SK-N-SH (cell line): ENCODE measurements at regions of chr5 and their contacts with region 1.

Region 1: DNA sequence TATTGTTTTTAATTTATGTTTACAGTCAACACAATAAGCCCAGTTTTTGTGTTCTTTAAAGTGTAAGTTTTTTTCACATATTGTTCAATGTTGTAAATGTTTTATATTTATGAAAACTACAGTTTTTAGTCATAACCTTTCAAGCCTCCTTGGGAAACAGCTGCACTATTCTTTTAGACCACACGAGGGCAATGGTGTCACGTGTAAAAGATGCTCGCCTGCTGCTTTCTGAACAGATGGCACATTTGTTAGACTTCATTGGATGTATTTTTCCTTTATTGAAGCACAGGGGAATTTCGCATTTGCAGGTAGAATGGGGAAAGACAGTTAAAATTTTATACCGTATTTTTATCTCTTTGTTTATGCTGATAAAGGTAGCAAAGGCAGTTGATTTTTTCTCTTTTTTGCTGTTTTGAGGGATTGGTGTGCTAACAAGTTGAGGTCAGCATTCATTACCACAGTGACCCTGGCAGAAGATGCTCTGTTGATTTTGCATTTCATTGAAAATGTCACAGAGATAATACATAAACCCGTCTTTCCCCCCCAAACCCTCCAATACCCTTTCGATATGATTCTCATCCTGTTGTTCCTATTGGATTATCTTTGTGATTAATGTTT is 59.0 kb downstream of the MAT2B start:
- DNase-seq: peak; percentile 58
- H3K4me3 ChIP-seq: no peak overlapping the region; a peak in 1 of 4 replicates
- H3K27ac ChIP-seq: peak overlapping the region in 1 of 2 experiments; percentile 64; a peak in 1 of 4 replicates
- H3K4me1 ChIP-seq: peaks cover 0 to 16% of the 10 kb centered on the region in 2 experiments; a peak in 3 of 4 replicates
- H3K27me3 ChIP-seq: no peaks in the 10 kb centered on the region
- CTCF ChIP-seq: peak; percentile 95
- EP300 ChIP-seq: peak in 1 of 2 experiments; percentile 9; a peak in 1 of 4 replicates
- RAD21 ChIP-seq: peak; percentile 98

Region 2: DNA sequence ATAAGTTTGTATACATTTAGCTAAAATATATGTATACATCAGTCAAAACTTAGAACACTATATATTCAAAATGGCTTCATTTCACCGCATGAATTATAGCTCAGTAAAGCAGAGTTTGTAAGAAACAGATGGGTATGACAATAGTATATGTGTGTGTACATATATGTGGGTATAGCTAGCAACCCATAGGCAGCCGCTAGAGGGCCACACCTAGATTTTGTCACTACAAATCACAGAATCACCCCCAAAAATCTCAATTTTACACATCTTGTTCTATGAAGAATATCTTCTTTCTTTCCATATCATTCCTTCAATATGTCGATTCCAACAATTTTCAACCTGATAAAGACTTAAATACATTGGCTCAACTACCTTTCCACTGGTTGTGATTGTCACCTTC is 484.8 kb before region 1 on chr5:
- CTCF ChIA-PET with region 1: no interaction called
- POLR2A ChIA-PET with region 1: no interaction called
- DNase-seq: peak; percentile 1
- H3K4me3 ChIP-seq: no peak overlapping the region
- H3K27ac ChIP-seq: no peak overlapping the region
- H3K4me1 ChIP-seq: no peaks in the 10 kb centered on the region
- H3K27me3 ChIP-seq: no peaks in the 10 kb centered on the region
- CTCF ChIP-seq: peak; percentile 57
- EP300 ChIP-seq: no peak
- RAD21 ChIP-seq: peak; percentile 19; the same call in 1 of the 2 replicates

Region 3: GRCh38 chr5:163552536-163552935 is 11.9 kb before region 1 on chr5:
- CTCF ChIA-PET with region 1: interaction called, 12 read pairs
- POLR2A ChIA-PET with region 1: no interaction called
- DNase-seq: no peak
- H3K4me3 ChIP-seq: no peak overlapping the region
- H3K27ac ChIP-seq: no peak overlapping the region
- H3K4me1 ChIP-seq: no peaks in the 10 kb centered on the region
- H3K27me3 ChIP-seq: no peaks in the 10 kb centered on the region
- CTCF ChIP-seq: no peak
- EP300 ChIP-seq: no peak
- RAD21 ChIP-seq: no peak

Region 4: DNA sequence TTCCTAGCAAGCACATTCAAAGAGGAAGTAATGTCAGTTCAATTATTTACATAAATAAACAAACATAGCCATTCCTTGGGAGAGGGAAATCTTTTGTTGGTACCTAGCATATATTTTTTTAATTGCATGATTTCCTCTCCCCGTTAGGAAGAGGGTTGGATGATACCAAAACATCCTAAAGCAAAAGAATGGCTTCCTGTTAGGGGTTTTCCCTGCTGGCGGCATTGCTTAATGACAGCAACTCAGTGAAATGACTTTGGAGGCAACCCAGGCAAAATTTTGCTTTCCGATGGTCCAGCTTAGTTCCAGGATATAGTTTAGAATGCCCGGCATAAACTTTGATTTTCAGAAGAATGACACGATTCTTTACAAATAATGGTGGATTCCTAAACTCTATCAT is 14.2 kb after region 1 on chr5:
- CTCF ChIA-PET with region 1: interaction called, 13 read pairs
- POLR2A ChIA-PET with region 1: no interaction called
- DNase-seq: no peak
- H3K4me3 ChIP-seq: no peak overlapping the region
- H3K27ac ChIP-seq: no peak overlapping the region
- H3K4me1 ChIP-seq: no peaks in the 10 kb centered on the region; a peak in 2 of 4 replicates
- H3K27me3 ChIP-seq: no peaks in the 10 kb centered on the region
- CTCF ChIP-seq: no peak
- EP300 ChIP-seq: no peak
- RAD21 ChIP-seq: no peak